Breast epithelium (tissue), 4 donors: ENCODE measurements at regions of chr9 and their contacts with region 1.

Region 1: GRCh38 chr9:72586388-72587130 is 65.2 kb downstream of the TMC1 start:
- DNase-seq: no peak
- H3K4me3 ChIP-seq: no peak overlapping the region
- H3K27ac ChIP-seq: no peak overlapping the region
- H3K4me1 ChIP-seq: no peaks in the 10 kb centered on the region
- H3K27me3 ChIP-seq: no peaks in the 10 kb centered on the region
- CTCF ChIP-seq: no peak
- POLR2A ChIP-seq: no peak

Region 2: DNA sequence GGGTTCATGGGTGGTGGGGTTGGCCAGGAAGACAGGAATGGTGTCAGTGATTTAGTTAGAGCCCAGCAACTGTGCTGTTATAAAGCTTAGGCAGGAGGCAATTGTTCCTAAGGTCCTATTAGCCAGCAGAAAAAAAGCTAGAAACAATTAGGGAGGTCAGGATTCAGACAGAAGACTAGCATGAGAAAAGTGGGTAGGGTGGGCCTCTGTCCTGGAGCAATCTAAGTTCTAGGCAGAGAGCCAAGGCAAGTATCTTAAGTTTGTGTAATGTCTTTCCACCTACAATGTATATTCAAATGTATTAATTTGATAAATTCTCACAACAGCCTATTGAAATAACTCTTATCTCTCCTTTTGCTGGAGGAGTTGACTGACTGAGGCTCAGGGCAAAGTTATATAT is 215.4 kb before region 1 on chr9:
- intact Hi-C with region 1: loop called (anchors 10 kb)
- DNase-seq: no peak
- H3K4me3 ChIP-seq: no peak overlapping the region
- H3K27ac ChIP-seq: no peak overlapping the region
- H3K4me1 ChIP-seq: no peaks in the 10 kb centered on the region
- H3K27me3 ChIP-seq: no peaks in the 10 kb centered on the region
- CTCF ChIP-seq: no peak
- POLR2A ChIP-seq: no peak